HepG2 (cell line): ENCODE measurements at regions of chr19 and their contacts with region 1.

Region 1: DNA sequence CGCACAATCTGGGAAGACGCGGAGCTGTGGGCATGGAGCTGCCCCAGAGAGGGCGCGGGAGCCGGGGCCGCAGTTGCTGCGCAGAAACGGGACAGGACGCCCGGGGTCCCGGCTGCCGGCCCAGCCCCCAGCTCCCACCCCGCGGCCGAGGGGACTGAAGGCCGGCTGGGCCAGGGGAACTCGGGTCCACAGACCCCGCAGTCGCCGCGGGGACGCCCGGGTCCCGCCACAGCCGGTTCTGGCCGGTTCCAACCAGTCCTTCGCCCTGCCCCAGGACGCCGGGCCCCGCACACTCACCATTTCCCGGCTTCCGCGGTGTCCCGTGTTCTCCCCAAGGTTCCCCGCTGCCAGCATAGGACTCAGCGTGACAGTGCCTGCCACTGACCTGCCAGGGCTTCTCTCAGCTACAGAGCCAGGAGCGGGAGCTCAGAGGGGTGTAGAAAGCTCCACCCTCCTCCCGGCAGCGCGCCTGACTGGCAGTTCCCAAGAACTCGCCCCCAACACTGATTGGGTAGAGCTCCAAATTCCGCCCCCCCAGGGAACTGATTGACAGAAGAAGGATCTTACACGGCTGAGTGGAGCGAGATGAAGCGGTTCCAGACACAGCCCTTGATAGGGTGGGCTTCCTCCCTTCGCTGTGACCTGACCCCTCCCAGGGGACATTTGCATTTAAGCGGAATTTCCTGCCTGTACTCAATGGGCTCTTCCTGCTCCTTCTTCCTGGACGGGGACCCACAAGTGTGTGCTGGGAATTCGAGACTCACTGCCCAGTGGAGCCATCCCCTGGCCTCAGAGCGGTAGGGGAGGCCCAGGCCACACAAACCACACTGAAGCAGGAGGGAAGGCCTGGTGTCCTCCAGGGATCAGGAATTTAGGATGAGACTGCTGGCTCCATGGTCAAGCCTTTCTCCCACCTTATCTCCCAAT is at the start of gene ZNF442:
- DNase-seq: peak; percentile 99
- ATAC-seq: peak; percentile 97
- H3K4me3 ChIP-seq: peak within 1 kb of the TSS; percentile 75 to 90 (median 89)
- H3K27ac ChIP-seq: peak within 1 kb of the TSS; percentile 81
- H3K4me1 ChIP-seq: peaks cover 24% of the 10 kb centered on the region
- H3K27me3 ChIP-seq: no peaks in the 10 kb centered on the region
- CTCF ChIP-seq: peak; percentile 86
- EP300 ChIP-seq: no peak
- POLR2A ChIP-seq: peak; percentile 89 to 95
- RAD21 ChIP-seq: peak; percentile 87
- total RNA-seq, gene ZNF442: 6.0 and 8.6 TPM in 2 replicates

Region 2: DNA sequence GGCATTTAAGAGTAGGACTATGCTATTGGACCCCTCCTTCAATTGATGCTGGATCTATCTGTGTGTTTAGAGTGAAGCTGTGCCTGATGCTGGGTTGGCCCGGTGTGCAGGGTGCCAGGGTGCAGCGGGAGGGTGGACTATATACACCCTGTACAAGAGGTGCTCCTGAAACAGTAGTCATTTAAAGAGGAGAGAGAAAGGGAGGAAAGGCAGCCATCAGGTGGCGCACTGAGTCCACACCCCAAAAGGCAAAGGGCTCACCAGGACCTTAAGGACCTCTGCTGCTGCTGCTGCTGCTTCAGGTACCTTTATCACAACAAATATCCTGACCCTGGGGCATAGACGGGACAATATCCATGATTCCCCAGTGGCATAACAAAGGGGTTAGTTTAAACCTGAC is 163.2 kb before region 1 on chr19:
- CTCF ChIA-PET with region 1: interaction called, 11 read pairs
- POLR2A ChIA-PET with region 1: no interaction called
- in situ Hi-C with region 1: no loop called
- intact Hi-C with region 1: loop called (anchors 5 kb)
- DNase-seq: peak; percentile 56
- ATAC-seq: peak; percentile 96
- H3K4me3 ChIP-seq: no peak overlapping the region
- H3K27ac ChIP-seq: no peak overlapping the region
- H3K4me1 ChIP-seq: 0 out of 2 replicates have a peak, but pooled peaks cover 7% of the 10 kb centered on the region
- H3K27me3 ChIP-seq: no peaks in the 10 kb centered on the region
- CTCF ChIP-seq: peak; percentile 91
- EP300 ChIP-seq: no peak
- POLR2A ChIP-seq: no peak
- RAD21 ChIP-seq: peak; percentile 81

Region 3: GRCh38 chr19:12294249-12295158 is 71.0 kb before region 1 on chr19 and contains the start of gene ZNF44:
- CTCF ChIA-PET with region 1: no interaction called
- POLR2A ChIA-PET with region 1: interaction called, 25 read pairs
- in situ Hi-C with region 1: loop called (anchors 10 kb)
- intact Hi-C with region 1: loop called (anchors 1 kb)
- DNase-seq: peak; percentile 99
- ATAC-seq: peak; percentile 94
- H3K4me3 ChIP-seq: peak within 1 kb of the TSS; percentile 83 to 97 (median 89)
- H3K27ac ChIP-seq: peak within 1 kb of the TSS; percentile 91
- H3K4me1 ChIP-seq: peaks cover 39% of the 10 kb centered on the region
- H3K27me3 ChIP-seq: no peaks in the 10 kb centered on the region
- CTCF ChIP-seq: peak; percentile 24; the same call in 1 of the 2 replicates
- EP300 ChIP-seq: 0 out of 4 replicates have a peak, but pooled peaks of 1 of the 2 experiments have one; percentile 15
- POLR2A ChIP-seq: peak; percentile 89 to 94
- RAD21 ChIP-seq: peak; percentile 34; the same call in 1 of the 2 replicates
- total RNA-seq, gene ZNF44: 15.7 and 16.6 TPM in 2 replicates

Region 4: DNA sequence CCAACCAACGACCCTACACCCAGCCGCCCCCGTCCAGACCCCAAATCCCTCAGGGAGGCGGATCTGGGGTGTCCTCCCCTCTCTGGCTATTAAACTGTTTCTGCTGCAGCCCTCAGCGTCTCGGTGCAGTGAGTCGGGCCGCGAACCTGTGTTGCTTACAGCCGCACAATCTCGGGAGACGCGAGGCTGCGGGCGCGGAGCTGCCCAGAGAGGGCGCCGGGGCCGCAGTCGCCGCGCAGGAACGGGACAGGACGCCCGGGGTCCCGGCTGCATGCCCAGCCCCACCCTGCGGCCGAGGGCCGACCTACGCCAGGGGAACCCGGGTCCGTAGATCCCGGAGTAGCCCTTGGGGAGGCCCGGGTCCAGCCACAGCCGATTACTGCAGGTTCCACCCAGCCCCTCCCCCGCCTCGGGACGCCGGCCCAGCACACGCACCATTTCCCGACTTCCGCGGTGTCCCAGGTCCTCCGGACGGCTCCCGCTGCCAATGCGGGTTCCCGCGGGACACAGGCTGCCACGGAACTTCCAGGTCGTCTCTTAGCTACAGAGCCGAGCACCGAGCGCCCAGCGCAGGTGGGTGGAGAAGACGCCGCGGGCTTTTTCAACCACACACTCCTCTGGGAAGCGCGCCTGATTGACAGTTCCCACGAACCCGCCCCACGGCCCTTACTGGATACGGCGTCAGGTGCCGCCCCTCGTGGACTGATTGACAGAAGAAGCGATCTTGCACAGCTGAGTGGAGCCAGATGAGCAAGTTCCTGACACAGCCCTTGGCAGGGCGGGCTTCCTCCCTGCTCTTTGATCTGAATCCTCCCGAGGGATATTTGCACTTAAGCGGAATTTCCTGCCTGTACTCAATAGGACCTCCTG is 35.4 kb after region 1 on chr19 and contains the start of gene ZNF799:
- CTCF ChIA-PET with region 1: no interaction called
- POLR2A ChIA-PET with region 1: interaction called, 11 read pairs
- in situ Hi-C with region 1: no loop called
- intact Hi-C with region 1: no loop called
- DNase-seq: peak; percentile 100
- ATAC-seq: peak; percentile 95
- H3K4me3 ChIP-seq: peak within 1 kb of the TSS; percentile 79 to 96 (median 92)
- H3K27ac ChIP-seq: peak within 1 kb of the TSS; percentile 88
- H3K4me1 ChIP-seq: peaks cover 26% of the 10 kb centered on the region
- H3K27me3 ChIP-seq: no peaks in the 10 kb centered on the region
- CTCF ChIP-seq: peak; percentile 17; the same call in 1 of the 2 replicates
- EP300 ChIP-seq: peak; percentile 59 to 61; a peak in 3 of 4 replicates
- POLR2A ChIP-seq: peak; percentile 78 to 83
- RAD21 ChIP-seq: peak; percentile 27; the same call in 1 of the 2 replicates
- total RNA-seq, gene ZNF799: 17.9 and 27.0 TPM in 2 replicates

Region 5: GRCh38 chr19:12495002-12495802 is 129.7 kb after region 1 on chr19:
- CTCF ChIA-PET with region 1: no interaction called
- POLR2A ChIA-PET with region 1: interaction called, 12 read pairs
- in situ Hi-C with region 1: no loop called
- intact Hi-C with region 1: no loop called
- DNase-seq: peak; percentile 95
- ATAC-seq: peak; percentile 94
- H3K4me3 ChIP-seq: peak overlapping the region; percentile 87 to 94 (median 91)
- H3K27ac ChIP-seq: peak overlapping the region; percentile 90
- H3K4me1 ChIP-seq: peaks cover 29% of the 10 kb centered on the region
- H3K27me3 ChIP-seq: no peaks in the 10 kb centered on the region; a peak in 1 of 5 replicates
- CTCF ChIP-seq: peak; percentile 93
- EP300 ChIP-seq: no peak
- POLR2A ChIP-seq: peak; percentile 97
- RAD21 ChIP-seq: peak; percentile 75